ENCODE measurements at regions of chrX and their contacts with region 1.

Region 1: GRCh38 chrX:118847676-118848075 is 24.1 kb downstream of the ZCCHC12 start:
- DNase-seq: peak; percentile 70
- H3K4me3 ChIP-seq: no peak overlapping the region
- H3K27ac ChIP-seq: no peak overlapping the region
- H3K4me1 ChIP-seq: peaks cover 3% of the 10 kb centered on the region
- H3K27me3 ChIP-seq: no peaks in the 10 kb centered on the region
- CTCF ChIP-seq: peak; percentile 19 to 38
- POLR2A ChIP-seq: no peak

Region 2: DNA sequence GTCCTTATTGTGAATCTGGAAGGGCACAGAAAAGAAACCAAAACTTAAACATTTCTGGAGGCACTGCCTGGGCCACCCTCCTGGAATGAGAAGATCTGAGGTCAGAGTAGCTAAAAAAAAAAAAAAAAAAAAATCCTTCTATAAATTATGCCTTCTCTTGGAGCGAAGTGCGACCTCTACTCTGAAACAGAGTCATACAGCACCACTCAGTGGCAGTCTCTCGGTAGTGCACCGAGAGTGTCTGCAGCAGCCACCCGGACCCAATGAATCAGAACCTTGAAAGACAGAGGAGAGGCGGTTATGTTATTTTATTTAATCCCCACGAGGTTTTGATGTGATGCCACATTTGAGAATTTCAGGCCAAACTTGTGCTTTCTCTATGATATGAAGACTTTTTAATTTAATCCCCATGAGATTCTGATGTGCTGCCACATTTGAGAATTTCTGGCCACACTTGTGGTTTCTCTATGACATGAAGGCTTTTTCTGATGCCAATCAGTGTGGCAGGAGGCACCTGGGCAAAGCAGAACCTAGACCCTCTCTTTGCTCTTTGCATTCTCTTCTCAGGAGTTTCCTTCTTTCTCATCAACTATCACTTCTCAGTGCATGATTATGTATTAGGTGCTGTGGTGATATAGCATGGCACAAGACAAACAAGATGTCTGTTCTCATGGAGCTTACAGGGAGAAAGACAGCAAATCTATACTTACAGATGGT is 219.5 kb after region 1 on chrX:
- CTCF ChIA-PET with region 1: interaction called, 41 read pairs
- POLR2A ChIA-PET with region 1: no interaction called
- dilution Hi-C with region 1: no loop called
- intact Hi-C with region 1: loop called (anchors 1 kb)
- DNase-seq: peak; percentile 64
- H3K4me3 ChIP-seq: no peak overlapping the region
- H3K27ac ChIP-seq: no peak overlapping the region
- H3K4me1 ChIP-seq: no peaks in the 10 kb centered on the region
- H3K27me3 ChIP-seq: peaks cover 0 to 2% of the 10 kb centered on the region in 2 experiments
- CTCF ChIP-seq: peak; percentile 53 to 57
- POLR2A ChIP-seq: no peak

Region 3: DNA sequence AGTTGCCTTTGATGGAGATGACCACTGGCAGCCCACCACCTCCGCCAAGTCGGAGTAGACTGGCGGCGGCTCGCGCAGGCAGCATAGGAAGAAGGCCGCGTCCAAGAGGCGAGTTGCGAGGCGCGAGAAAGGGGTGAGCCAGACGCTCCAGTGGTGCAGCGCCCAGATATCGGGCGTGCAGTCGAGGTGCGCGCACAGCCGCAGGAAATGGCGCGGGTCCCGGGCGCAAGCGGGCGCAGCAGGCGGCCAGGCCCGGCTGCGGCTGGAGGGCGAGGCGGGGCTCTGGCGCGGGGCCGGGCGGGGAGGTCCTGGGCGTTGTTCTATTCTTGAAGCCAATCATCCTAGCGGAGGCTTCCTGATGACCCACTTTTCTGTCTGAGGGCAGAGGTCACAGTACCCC is 375.3 kb after region 1 on chrX:
- CTCF ChIA-PET with region 1: no interaction called
- POLR2A ChIA-PET with region 1: no interaction called
- dilution Hi-C with region 1: no loop called
- intact Hi-C with region 1: loop called (anchors 1 kb)
- DNase-seq: no peak
- H3K4me3 ChIP-seq: no peak overlapping the region
- H3K27ac ChIP-seq: no peak overlapping the region
- H3K4me1 ChIP-seq: no peaks in the 10 kb centered on the region
- H3K27me3 ChIP-seq: peaks cover 0 to 5% of the 10 kb centered on the region in 2 experiments
- CTCF ChIP-seq: no peak
- POLR2A ChIP-seq: no peak

Measured in endothelial cell of umbilical vein (primary cell).